ENCODE measurements at regions of chr12 and their contacts with region 1.

Region 1: DNA sequence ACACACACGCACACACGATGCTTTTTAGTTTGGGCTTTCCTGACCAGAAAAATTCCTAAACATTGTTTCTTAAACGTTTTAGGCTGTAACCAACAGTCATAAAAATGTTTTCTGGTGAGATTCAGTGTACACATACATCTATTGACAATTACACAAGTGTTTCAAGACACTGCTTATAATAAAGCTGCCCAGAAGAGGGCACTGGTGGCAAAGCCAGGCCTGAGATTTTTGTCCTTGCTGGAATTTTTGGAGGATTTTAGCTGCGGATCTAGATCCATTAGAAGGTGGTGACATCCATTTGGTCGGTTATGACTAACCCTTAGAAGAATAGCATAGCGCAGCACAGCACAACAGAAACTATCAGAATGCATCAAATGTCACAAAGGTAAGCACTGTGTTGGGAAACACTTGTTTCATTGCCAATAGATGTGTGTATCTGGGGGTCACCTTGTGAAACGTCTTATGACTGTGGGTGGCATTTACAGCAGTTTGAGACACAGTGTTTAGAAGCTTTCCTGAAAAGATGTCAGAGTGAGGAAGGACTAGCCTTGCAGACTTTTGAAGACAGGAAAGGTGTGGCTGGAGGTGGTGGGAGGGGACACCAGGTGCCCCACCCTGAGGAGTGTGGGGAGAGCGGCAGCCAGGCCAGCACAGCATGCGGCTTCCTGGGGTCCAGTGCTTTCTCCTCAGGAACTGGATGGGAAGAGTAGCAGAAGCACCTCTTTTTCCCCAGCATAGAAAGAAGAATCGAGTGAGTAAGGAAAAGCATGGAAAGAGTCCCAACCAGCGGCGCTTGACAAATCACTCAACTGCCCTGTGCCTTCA is 54.7 kb upstream of the FKBP4 start:
- DNase-seq: peak; percentile 45
- H3K4me3 Mint-ChIP-seq: no peak overlapping the region
- H3K27ac Mint-ChIP-seq: no peak overlapping the region
- H3K4me1 Mint-ChIP-seq: no peaks in the 10 kb centered on the region
- H3K27me3 Mint-ChIP-seq: peaks cover 83% of the 10 kb centered on the region
- CTCF ChIP-seq: peak; percentile 48

Region 2: GRCh38 chr12:2751686-2752085 is 11.7 kb after region 1 on chr12:
- CTCF ChIA-PET with region 1: interaction called, 12 read pairs
- POLR2A ChIA-PET with region 1: no interaction called
- intact Hi-C with region 1: no loop called
- DNase-seq: no peak
- H3K4me3 Mint-ChIP-seq: no peak overlapping the region
- H3K27ac Mint-ChIP-seq: no peak overlapping the region
- H3K4me1 Mint-ChIP-seq: no peaks in the 10 kb centered on the region
- H3K27me3 Mint-ChIP-seq: peaks cover 86% of the 10 kb centered on the region
- CTCF ChIP-seq: no peak

Region 3: GRCh38 chr12:2783936-2784600 is 44.0 kb after region 1 on chr12:
- CTCF ChIA-PET with region 1: interaction called, 12 read pairs
- POLR2A ChIA-PET with region 1: interaction called, 3 read pairs
- intact Hi-C with region 1: loop called (anchors 1 kb)
- DNase-seq: peak; percentile 54
- H3K4me3 Mint-ChIP-seq: no peak overlapping the region
- H3K27ac Mint-ChIP-seq: no peak overlapping the region
- H3K4me1 Mint-ChIP-seq: peaks cover 6% of the 10 kb centered on the region
- H3K27me3 Mint-ChIP-seq: peaks cover 80% of the 10 kb centered on the region
- CTCF ChIP-seq: peak; percentile 83

Region 4: DNA sequence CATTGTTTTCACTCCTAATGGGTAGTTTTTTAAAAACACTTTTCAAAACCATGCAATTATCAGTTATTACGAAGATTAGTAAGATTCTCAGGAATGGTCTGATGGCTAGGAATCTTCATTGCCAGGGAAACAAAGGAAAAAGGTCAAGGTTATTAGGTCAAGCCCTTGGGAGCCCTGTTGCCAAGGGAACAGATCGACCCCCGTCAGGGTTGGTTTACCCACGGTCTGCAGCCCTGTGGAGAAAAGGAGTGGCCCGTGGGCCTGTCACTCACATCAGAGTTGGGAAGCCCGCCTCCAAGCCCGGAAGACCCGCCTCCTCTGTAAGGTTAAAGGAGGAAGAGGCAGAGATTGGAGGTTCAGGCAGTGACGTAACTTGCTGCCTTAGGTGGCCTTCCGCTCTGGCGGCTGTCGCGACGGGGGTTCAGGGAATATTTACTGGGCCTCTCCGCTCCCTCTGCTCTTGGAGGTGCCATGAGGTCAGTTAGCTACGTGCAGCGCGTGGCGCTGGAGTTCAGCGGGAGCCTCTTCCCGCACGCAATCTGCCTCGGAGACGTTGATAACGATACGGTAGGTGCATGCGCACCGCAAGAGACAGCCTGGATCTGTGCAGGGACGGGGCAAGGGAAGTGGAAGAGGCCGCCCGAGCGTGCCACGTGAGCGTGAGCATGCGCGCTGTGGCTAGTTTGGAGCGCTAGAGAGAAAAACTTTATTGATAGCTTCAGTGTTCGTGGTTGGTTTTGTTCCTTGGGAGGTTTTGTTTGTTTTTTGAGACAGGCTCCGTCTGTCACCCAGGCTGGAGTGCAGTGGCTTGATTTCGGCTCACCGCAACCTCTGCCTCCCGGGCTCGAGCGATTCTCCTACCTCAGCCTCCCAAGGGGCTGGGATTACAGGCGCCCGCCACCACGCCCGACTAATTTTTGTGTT is 72.5 kb after region 1 on chr12 and contains the start of gene ITFG2:
- CTCF ChIA-PET with region 1: interaction called, 5 read pairs
- POLR2A ChIA-PET with region 1: no interaction called
- intact Hi-C with region 1: loop called (anchors 1 kb)
- DNase-seq: peak; percentile 99
- H3K4me3 Mint-ChIP-seq: peak within 1 kb of the TSS; percentile 100
- H3K27ac Mint-ChIP-seq: peak within 1 kb of the TSS; percentile 98
- H3K4me1 Mint-ChIP-seq: peaks cover 6% of the 10 kb centered on the region
- H3K27me3 Mint-ChIP-seq: no peaks in the 10 kb centered on the region
- CTCF ChIP-seq: no peak
- total RNA-seq, gene ITFG2: 26.5 and 28.1 TPM in 2 replicates

Measured in MCF 10A (cell line).